HEK293 (cell line): ENCODE measurements at regions of chr7 and their contacts with region 1.

Region 1: DNA sequence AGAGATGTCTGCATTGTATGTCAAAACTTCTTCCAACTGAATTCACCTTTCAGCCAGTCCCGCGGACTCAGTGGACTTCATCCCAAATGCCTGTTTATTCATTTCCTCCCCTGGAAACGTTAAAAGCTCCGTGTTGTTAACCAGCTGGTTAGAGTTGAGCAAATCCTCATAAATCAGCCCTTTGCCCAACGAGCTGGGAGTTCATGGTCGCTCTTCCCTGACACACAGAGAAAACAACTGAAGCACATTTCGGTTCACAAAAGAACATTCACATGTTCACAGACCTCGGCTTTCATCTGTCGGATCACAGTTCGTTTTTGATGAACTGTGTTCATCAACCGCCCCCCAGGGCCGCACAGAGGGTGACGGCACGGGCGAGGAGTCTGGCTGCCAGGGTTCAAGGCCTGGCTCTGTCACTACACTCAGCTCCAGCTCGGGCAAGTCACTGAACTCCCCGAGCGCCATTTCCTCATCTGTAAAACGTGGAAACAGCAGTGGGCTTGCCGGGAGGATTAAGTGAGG is 62.6 kb downstream of the GLI3 start:
- H3K4me3 ChIP-seq: no peak overlapping the region
- H3K27ac ChIP-seq: no peak overlapping the region
- H3K4me1 ChIP-seq: peaks cover 12% of the 10 kb centered on the region
- CTCF ChIP-seq: no peak

Region 2: DNA sequence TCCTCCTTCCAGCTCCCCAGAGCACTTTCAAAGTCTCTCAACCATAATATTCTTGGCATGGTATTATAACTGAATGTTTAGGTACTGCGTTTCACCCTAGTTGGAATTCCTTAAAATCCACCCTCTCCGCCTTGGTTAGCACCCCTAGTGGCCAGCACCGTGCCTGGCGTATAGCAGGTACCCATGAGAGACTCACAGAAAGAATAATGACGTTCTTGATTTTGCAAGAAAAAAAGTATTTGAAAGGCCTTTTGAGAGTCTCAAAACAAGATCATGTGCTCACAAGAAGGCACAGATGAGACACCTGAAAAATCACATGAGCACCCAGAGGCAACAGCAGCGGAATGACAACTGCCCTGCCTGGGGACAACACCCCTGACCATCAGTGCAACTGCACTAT is 11.8 kb after region 1 on chr7:
- CTCF ChIA-PET with region 1: interaction called, 13 read pairs
- POLR2A ChIA-PET with region 1: no interaction called
- H3K4me3 ChIP-seq: no peak overlapping the region
- H3K27ac ChIP-seq: no peak overlapping the region
- H3K4me1 ChIP-seq: no peaks in the 10 kb centered on the region
- CTCF ChIP-seq: no peak